ENCODE measurements at regions of chr15 and their contacts with region 1.

Region 1: GRCh38 chr15:70679919-70680231 is 83.5 kb downstream of the UACA start:
- DNase-seq: no peak
- ATAC-seq: no peak
- H3K4me3 ChIP-seq: no peak overlapping the region
- H3K4me3 Mint-ChIP-seq: no peak overlapping the region
- H3K27ac ChIP-seq: no peak overlapping the region
- H3K27ac Mint-ChIP-seq: no peak overlapping the region
- H3K4me1 ChIP-seq: no peaks in the 10 kb centered on the region
- H3K4me1 Mint-ChIP-seq: peaks cover 3 to 10% (median 4%) of the 10 kb centered on the region in 7 donors
- H3K27me3 ChIP-seq: no peaks in the 10 kb centered on the region
- H3K27me3 Mint-ChIP-seq: peaks cover 4 to 62% (median 10%) of the 10 kb centered on the region in 5 donors

Region 2: DNA sequence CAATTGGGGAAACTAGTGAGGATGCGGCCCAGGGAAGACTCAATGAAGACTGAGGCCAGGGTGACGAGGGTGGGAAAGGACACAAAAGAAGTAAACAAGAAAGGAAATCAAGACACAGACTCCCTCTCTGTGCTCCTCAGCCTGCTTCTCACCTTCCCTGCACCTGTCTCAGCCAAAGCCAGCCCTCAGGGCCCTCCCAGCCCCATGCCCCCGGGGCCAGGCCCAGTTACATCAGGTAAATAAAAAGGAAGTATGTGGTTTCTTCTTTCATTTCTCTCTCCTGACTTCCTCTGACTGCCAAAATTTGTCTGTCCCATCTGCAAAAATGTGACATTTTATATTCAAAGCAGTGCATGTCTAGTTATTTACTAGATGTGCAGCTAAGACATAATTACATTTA is 244.5 kb before region 1 on chr15:
- CTCF ChIA-PET with region 1: no interaction called
- POLR2A ChIA-PET with region 1: no interaction called
- intact Hi-C with region 1: no loop called
- DNase-seq: peak in 4 of 9 donors; percentile 27 to 34 (median 32)
- ATAC-seq: peak; percentile 45
- H3K4me3 ChIP-seq: no peak overlapping the region
- H3K4me3 Mint-ChIP-seq: peak overlapping the region; percentile 30 to 63 (median 50)
- H3K27ac ChIP-seq: no peak overlapping the region
- H3K27ac Mint-ChIP-seq: peak overlapping the region in 8 of 9 donors; percentile 2 to 83 (median 58)
- H3K4me1 ChIP-seq: peaks cover 0 to 25% of the 10 kb centered on the region in 2 donors
- H3K4me1 Mint-ChIP-seq: peaks cover 27 to 48% (median 34%) of the 10 kb centered on the region in 7 donors
- H3K27me3 ChIP-seq: no peaks in the 10 kb centered on the region
- H3K27me3 Mint-ChIP-seq: peaks cover 0 to 20% (median 0%) of the 10 kb centered on the region in 5 donors

Region 3: DNA sequence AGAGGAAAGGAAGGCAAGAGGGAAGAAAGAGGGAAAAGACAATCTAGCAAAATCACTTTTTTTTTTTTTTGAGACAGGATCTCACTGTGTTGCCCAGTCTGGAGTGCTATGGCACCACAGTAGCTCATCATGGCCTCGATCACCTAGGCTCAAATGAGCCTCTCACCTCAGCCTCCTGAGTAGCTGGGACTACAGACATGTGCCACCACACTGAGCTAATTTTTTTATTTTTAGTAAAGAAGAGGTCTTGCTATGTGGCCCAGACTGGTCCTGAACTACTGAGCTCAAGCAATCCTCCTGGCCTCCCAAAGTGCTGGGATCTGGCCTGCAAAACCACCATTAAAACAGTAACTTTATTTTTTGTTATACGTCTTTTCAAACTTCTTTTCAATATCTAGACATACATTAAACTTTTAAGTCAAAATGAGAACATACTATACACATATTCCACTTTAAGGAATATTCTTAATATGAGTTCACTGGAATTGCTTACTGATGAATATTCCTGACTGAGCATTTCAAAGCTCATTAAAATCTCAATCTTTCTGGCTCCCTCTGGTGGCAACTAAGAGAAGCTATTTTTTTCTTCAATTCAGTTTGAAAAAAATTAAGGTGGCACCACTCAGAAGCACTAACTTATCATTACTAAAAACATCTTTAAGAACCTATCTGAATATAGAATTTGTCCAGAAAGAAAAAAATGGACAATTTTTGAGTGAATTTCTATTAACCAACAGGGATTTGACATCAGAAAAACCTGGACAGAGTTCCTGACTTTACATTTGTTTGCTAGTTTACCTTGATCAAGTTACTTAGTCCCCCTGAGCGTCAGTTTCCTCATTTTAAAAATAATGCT is 42.6 kb after region 1 on chr15:
- CTCF ChIA-PET with region 1: interaction called, 31 read pairs
- POLR2A ChIA-PET with region 1: no interaction called
- intact Hi-C with region 1: loop called (anchors 1 kb)
- DNase-seq: peak in 6 of 9 donors; percentile 2 to 42 (median 32)
- ATAC-seq: no peak
- H3K4me3 ChIP-seq: no peak overlapping the region
- H3K4me3 Mint-ChIP-seq: no peak overlapping the region
- H3K27ac ChIP-seq: no peak overlapping the region
- H3K27ac Mint-ChIP-seq: no peak overlapping the region
- H3K4me1 ChIP-seq: no peaks in the 10 kb centered on the region
- H3K4me1 Mint-ChIP-seq: peaks cover 0 to 4% (median 0%) of the 10 kb centered on the region in 7 donors
- H3K27me3 ChIP-seq: peaks cover 0 to 10% of the 10 kb centered on the region in 2 donors
- H3K27me3 Mint-ChIP-seq: peaks cover 0 to 38% (median 12%) of the 10 kb centered on the region in 5 donors

Region 4: GRCh38 chr15:70783599-70784022 is 103.7 kb after region 1 on chr15:
- CTCF ChIA-PET with region 1: no interaction called
- POLR2A ChIA-PET with region 1: no interaction called
- intact Hi-C with region 1: no loop called
- DNase-seq: no peak
- ATAC-seq: no peak
- H3K4me3 ChIP-seq: no peak overlapping the region
- H3K4me3 Mint-ChIP-seq: no peak overlapping the region
- H3K27ac ChIP-seq: no peak overlapping the region
- H3K27ac Mint-ChIP-seq: no peak overlapping the region
- H3K4me1 ChIP-seq: no peaks in the 10 kb centered on the region
- H3K4me1 Mint-ChIP-seq: no peaks in the 10 kb centered on the region
- H3K27me3 ChIP-seq: no peaks in the 10 kb centered on the region
- H3K27me3 Mint-ChIP-seq: peaks cover 0 to 18% (median 7%) of the 10 kb centered on the region in 5 donors

Region 5: GRCh38 chr15:70810916-70811578 is 131.2 kb after region 1 on chr15:
- CTCF ChIA-PET with region 1: interaction called, 3 read pairs
- POLR2A ChIA-PET with region 1: no interaction called
- intact Hi-C with region 1: loop called in 1 of 2 experiments (anchors 1 kb)
- DNase-seq: no peak
- ATAC-seq: no peak
- H3K4me3 ChIP-seq: no peak overlapping the region
- H3K4me3 Mint-ChIP-seq: no peak overlapping the region
- H3K27ac ChIP-seq: no peak overlapping the region
- H3K27ac Mint-ChIP-seq: no peak overlapping the region
- H3K4me1 ChIP-seq: no peaks in the 10 kb centered on the region
- H3K4me1 Mint-ChIP-seq: peaks cover 0 to 13% (median 9%) of the 10 kb centered on the region in 7 donors
- H3K27me3 ChIP-seq: no peaks in the 10 kb centered on the region
- H3K27me3 Mint-ChIP-seq: peaks cover 0 to 11% (median 6%) of the 10 kb centered on the region in 5 donors

Region 6: GRCh38 chr15:71437404-71438318 is 757.8 kb after region 1 on chr15:
- CTCF ChIA-PET with region 1: no interaction called
- POLR2A ChIA-PET with region 1: no interaction called
- intact Hi-C with region 1: loop called in 1 of 2 experiments (anchors 10 kb)
- DNase-seq: no peak
- ATAC-seq: no peak
- H3K4me3 ChIP-seq: no peak overlapping the region
- H3K4me3 Mint-ChIP-seq: no peak overlapping the region
- H3K27ac ChIP-seq: no peak overlapping the region
- H3K27ac Mint-ChIP-seq: no peak overlapping the region
- H3K4me1 ChIP-seq: no peaks in the 10 kb centered on the region
- H3K4me1 Mint-ChIP-seq: peaks cover 0 to 4% (median 0%) of the 10 kb centered on the region in 7 donors
- H3K27me3 ChIP-seq: no peaks in the 10 kb centered on the region
- H3K27me3 Mint-ChIP-seq: peaks cover 0 to 18% (median 10%) of the 10 kb centered on the region in 5 donors

Measured in naive thymus-derived CD4-positive, alpha-beta T cell (primary cell).